Right lobe of liver (tissue), 6 donors: ENCODE measurements at regions of chr16 and their contacts with region 1.

Region 1: GRCh38 chr16:69754469-69755310 is at the start of gene NOB1:
- DNase-seq: peak; percentile 97 to 98 (median 97)
- ATAC-seq: peak; percentile 98 to 99 (median 99)
- H3K4me3 ChIP-seq: peak within 1 kb of the TSS; percentile 66 to 89 (median 82)
- H3K27ac ChIP-seq: peak within 1 kb of the TSS; percentile 24 to 59 (median 34)
- H3K4me1 ChIP-seq: peaks cover 0 to 11% (median 3%) of the 10 kb centered on the region in 4 donors
- H3K27me3 ChIP-seq: no peaks in the 10 kb centered on the region
- CTCF ChIP-seq: peak in 3 of 4 donors; percentile 96 to 100 (median 98)
- POLR2A ChIP-seq: peak; percentile 64
- total RNA-seq, gene NOB1: 15.5 to 19.5 (median 16.6) TPM

Region 2: GRCh38 chr16:69396187-69397061 is 358.3 kb before region 1 on chr16:
- intact Hi-C with region 1: loop called in 1 of 2 experiments (anchors 10 kb)
- DNase-seq: peak in 2 of 3 donors; percentile 30 to 80
- ATAC-seq: peak; percentile 83 to 91 (median 85)
- H3K4me3 ChIP-seq: peak overlapping the region in 2 of 3 donors; percentile 21 to 28
- H3K27ac ChIP-seq: peak overlapping the region; percentile 53 to 90 (median 86)
- H3K4me1 ChIP-seq: peaks cover 0 to 26% (median 6%) of the 10 kb centered on the region in 4 donors
- H3K27me3 ChIP-seq: no peaks in the 10 kb centered on the region
- CTCF ChIP-seq: peak; percentile 64 to 78 (median 70)
- POLR2A ChIP-seq: no peak